Mammary epithelial cell (primary cell): ENCODE measurements at regions of chr15 and their contacts with region 1.

Region 1: GRCh38 chr15:99733268-99734039 is at the start of gene LYSMD4:
- DNase-seq: peak; percentile 91
- H3K4me3 ChIP-seq: peak within 1 kb of the TSS; percentile 64 to 82 (median 70)
- H3K27ac ChIP-seq: peak within 1 kb of the TSS; percentile 47
- H3K4me1 ChIP-seq: peaks cover 28% of the 10 kb centered on the region
- H3K27me3 ChIP-seq: no peaks in the 10 kb centered on the region
- CTCF ChIP-seq: no peak
- total RNA-seq, gene LYSMD4: 10.9 to 20.5 TPM

Region 2: GRCh38 chr15:99104788-99105513 is 628.5 kb before region 1 on chr15 and contains the start of gene SYNM:
- CTCF ChIA-PET with region 1: no interaction called
- dilution Hi-C with region 1: no loop called
- in situ Hi-C with region 1: no loop called
- intact Hi-C with region 1: loop called (anchors 10 kb)
- DNase-seq: peak; percentile 74
- H3K4me3 ChIP-seq: peak within 1 kb of the TSS; percentile 34 to 54 (median 49)
- H3K27ac ChIP-seq: no peak within 1 kb of the TSS
- H3K4me1 ChIP-seq: peaks cover 30% of the 10 kb centered on the region
- H3K27me3 ChIP-seq: peaks cover 1% of the 10 kb centered on the region
- CTCF ChIP-seq: peak; percentile 43 to 60
- total RNA-seq, gene SYNM: 0.82 to 4.3 TPM

Region 3: DNA sequence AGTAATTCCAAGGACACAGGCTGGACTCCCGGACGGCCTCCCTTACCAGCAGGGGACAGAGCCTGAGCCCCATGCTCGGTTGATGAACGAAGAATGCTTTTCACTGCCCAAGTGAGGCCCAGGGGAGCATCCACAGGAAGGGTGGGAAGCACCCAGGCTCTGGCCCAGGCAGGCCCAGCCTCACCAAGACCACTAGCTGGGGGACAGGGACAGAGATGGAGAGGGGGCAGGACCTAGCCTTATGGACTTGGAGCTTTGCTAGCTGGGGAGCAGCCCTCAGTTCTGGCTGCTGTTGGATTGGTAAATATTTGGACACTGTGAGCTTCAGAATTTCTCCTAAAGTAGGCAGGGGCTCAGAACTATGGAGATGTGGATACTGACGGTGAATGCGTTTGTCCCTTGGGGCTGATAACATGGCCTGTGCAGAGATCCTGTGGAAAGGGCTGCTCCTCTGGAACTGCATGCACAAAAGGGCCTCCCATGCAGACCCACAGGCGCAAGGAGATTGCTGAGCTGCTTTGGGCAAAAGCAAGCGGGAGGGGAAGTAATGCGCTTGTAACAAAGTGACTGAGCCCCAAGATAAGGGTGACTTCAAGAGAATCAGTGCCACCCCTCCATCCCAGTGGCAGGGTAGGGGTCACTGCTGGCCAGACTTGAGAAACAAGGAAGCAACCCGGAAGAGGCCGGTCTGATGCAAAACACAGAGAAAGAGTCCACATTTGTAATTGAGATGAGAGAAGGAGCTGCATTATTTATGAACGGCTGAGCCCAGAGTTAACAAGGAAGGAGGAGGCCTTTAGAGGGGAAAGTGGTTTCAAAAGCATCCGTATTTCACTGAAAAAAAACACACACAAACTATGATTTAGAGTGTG is 237.8 kb before region 1 on chr15:
- CTCF ChIA-PET with region 1: no interaction called
- dilution Hi-C with region 1: no loop called
- in situ Hi-C with region 1: no loop called
- intact Hi-C with region 1: no loop called
- DNase-seq: no peak
- H3K4me3 ChIP-seq: no peak overlapping the region
- H3K27ac ChIP-seq: no peak overlapping the region
- H3K4me1 ChIP-seq: no peaks in the 10 kb centered on the region
- H3K27me3 ChIP-seq: no peaks in the 10 kb centered on the region
- CTCF ChIP-seq: no peak

Region 4: DNA sequence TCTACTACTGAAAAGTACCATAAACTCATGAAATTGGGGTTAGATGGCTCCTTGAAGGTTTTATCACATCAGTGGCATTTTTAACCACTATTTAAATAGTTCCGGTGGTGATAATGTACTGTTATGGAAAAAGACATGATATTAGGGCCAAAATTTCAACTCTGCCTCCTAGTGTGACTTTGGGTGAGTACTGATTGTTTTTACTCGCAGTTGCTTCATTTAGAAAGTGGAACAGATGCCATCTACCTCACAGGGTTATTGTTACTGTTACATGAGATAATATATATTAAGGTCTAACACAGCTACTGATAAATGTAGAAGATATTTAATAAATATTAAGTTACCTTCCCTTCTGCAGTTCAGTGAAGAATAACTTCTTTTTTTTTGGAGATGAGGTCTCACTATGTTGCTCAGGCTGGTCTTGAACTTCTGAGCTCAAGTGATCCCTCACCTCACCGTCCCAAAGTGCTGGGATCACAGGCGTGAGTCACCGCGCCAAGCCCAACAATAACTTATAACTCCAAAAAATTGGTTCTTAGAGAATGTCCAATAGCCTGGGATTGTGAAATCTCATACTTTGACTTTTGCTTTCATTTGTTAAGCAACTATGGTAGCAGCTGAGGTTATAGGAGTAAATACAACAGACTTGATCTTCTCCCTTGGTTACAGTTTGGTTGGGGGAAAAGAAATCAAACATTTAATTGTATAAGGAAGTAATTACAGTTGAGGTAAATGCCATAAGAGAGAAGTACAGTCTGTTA is 119.4 kb before region 1 on chr15:
- CTCF ChIA-PET with region 1: no interaction called
- dilution Hi-C with region 1: no loop called
- in situ Hi-C with region 1: no loop called
- intact Hi-C with region 1: no loop called
- DNase-seq: peak; percentile 20
- H3K4me3 ChIP-seq: no peak overlapping the region
- H3K27ac ChIP-seq: no peak overlapping the region
- H3K4me1 ChIP-seq: peaks cover 19% of the 10 kb centered on the region
- H3K27me3 ChIP-seq: no peaks in the 10 kb centered on the region
- CTCF ChIP-seq: no peak

Region 5: DNA sequence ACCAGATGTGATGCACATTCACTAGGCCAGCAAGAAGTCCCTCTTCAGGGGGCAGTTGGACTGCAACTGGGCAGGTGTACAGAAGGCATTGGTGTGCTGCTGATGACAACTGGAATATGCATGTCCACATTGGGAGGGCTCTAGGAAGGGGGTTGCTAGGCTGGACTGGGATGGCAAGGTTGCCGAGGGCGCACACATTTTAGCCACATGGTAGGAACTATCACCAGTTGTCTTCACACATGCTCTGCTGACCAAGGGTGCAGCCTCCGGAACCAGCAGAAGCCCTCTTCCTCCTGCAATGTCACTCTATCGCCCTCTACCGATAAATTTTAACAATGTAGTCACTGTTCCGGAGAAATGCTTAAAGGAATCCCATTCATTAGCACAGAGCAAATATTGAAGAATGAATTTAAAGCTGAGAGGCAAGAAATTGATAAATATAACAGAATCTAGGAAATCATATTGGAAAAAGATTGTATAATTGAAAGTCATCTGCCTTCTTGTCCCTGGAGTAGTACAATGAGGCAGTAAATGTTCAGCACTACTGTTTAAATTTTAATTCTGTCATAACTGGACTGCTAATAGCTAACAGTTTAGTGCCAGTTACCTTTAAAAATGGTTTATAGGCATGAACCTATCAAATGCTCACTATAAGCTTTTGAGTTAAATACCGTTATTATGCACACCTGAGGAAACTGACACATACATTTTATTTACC is 22.4 kb after region 1 on chr15:
- CTCF ChIA-PET with region 1: interaction called, 9 read pairs
- dilution Hi-C with region 1: no loop called
- in situ Hi-C with region 1: no loop called
- intact Hi-C with region 1: loop called (anchors 2 kb)
- DNase-seq: peak; percentile 52
- H3K4me3 ChIP-seq: no peak overlapping the region
- H3K27ac ChIP-seq: no peak overlapping the region
- H3K4me1 ChIP-seq: no peaks in the 10 kb centered on the region
- H3K27me3 ChIP-seq: no peaks in the 10 kb centered on the region
- CTCF ChIP-seq: peak; percentile 74 to 87